ENCODE measurements at regions of chr11 and their contacts with region 1.

Region 1: DNA sequence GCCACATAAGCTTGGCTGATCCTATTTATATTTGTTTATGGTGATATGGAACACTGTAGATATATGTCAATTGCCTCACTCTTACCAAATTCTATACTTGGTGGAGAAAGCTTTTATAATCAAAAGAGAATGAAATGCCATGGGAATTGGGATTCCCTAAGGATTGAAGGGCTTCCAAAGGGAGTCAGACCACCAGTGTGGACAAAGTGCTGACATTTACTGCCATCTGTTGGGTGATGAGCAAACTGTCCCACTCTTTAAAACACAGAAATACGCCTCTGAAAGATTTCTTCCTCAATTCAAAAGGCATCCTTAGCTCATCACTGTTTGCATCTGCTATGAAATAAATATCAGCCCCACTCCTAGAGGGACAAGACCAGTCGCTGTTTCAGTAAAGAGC is 7.1 kb downstream of the SLC1A2 start:
- DNase-seq: peak in 1 of 2 experiments; percentile 30
- H3K4me3 ChIP-seq: no peak overlapping the region
- H3K4me3 Mint-ChIP-seq: no peak overlapping the region
- H3K27ac Mint-ChIP-seq: no peak overlapping the region
- H3K4me1 ChIP-seq: no peaks in the 10 kb centered on the region
- H3K4me1 Mint-ChIP-seq: no peaks in the 10 kb centered on the region
- H3K27me3 ChIP-seq: peaks cover 1% of the 10 kb centered on the region; the same call in 1 of the 2 replicates
- H3K27me3 Mint-ChIP-seq: peaks cover 12% of the 10 kb centered on the region
- CTCF ChIP-seq: peak; percentile 56 to 71

Region 2: DNA sequence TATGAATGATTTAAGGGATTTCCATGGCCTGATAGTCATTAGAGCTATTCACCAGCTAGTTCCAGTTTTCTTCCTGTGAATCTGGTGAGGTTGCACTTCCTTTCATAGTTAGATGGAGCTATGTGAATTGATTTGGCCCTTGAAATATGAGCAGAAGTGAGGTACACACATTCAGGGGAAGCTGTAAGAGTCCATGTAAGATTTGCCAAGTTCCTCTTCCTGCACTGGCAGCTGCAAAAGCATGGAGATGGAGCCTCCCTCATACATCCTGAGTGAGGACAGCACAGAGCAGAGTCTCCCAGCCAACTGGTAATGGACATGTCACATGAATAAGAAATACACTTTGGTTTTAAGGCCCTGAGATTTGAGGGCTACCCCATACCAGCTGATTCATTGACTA is 161.7 kb before region 1 on chr11:
- CTCF ChIA-PET with region 1: no interaction called
- POLR2A ChIA-PET with region 1: no interaction called
- intact Hi-C with region 1: loop called (anchors 5 kb)
- DNase-seq: no peak
- H3K4me3 ChIP-seq: no peak overlapping the region
- H3K4me3 Mint-ChIP-seq: no peak overlapping the region
- H3K27ac Mint-ChIP-seq: no peak overlapping the region
- H3K4me1 ChIP-seq: no peaks in the 10 kb centered on the region
- H3K4me1 Mint-ChIP-seq: no peaks in the 10 kb centered on the region
- H3K27me3 ChIP-seq: no peaks in the 10 kb centered on the region
- H3K27me3 Mint-ChIP-seq: peaks cover 3% of the 10 kb centered on the region
- CTCF ChIP-seq: no peak

Measured in Caco-2 (cell line).